ENCODE measurements at regions of chr12 and their contacts with region 1.

Region 1: GRCh38 chr12:28683356-28683755 is 465.7 kb upstream of the FAR2 start:
- DNase-seq: no peak
- ATAC-seq: no peak
- H3K4me3 ChIP-seq: no peak overlapping the region
- H3K27ac ChIP-seq: no peak overlapping the region
- H3K4me1 ChIP-seq: no peaks in the 10 kb centered on the region
- H3K27me3 ChIP-seq: no peaks in the 10 kb centered on the region; a peak in 1 of 5 replicates
- CTCF ChIP-seq: no peak
- EP300 ChIP-seq: no peak
- POLR2A ChIP-seq: no peak
- RAD21 ChIP-seq: no peak

Region 2: GRCh38 chr12:27952510-27952909 is 730.8 kb before region 1 on chr12:
- CTCF ChIA-PET with region 1: no interaction called
- POLR2A ChIA-PET with region 1: no interaction called
- in situ Hi-C with region 1: no loop called
- intact Hi-C with region 1: no loop called
- DNase-seq: no peak
- ATAC-seq: no peak
- H3K4me3 ChIP-seq: no peak overlapping the region
- H3K27ac ChIP-seq: no peak overlapping the region
- H3K4me1 ChIP-seq: peaks cover 7% of the 10 kb centered on the region
- H3K27me3 ChIP-seq: no peaks in the 10 kb centered on the region; a peak in 2 of 5 replicates
- CTCF ChIP-seq: no peak
- EP300 ChIP-seq: no peak
- POLR2A ChIP-seq: no peak
- RAD21 ChIP-seq: no peak

Region 3: DNA sequence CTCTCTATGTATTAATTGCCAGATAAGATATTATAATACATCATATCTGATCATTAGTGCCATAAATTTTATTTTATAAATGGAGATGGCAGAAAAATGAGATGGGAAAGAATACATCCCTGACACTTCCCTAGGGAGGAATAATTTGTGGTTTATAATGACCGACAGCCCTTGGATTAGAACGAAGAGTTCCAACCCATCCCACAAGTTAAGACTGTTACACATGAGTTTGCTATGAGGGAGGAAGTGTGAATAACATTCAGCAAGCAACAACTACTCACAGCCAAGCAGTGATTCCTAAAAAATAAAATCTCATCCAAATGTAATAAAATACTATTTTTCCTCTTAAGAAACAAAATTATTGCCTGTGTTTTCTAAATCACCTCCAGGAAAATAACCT is 194.1 kb before region 1 on chr12:
- CTCF ChIA-PET with region 1: no interaction called
- POLR2A ChIA-PET with region 1: no interaction called
- in situ Hi-C with region 1: no loop called
- intact Hi-C with region 1: no loop called
- DNase-seq: no peak
- ATAC-seq: no peak
- H3K4me3 ChIP-seq: no peak overlapping the region
- H3K27ac ChIP-seq: no peak overlapping the region
- H3K4me1 ChIP-seq: no peaks in the 10 kb centered on the region
- H3K27me3 ChIP-seq: no peaks in the 10 kb centered on the region
- CTCF ChIP-seq: no peak
- EP300 ChIP-seq: no peak
- POLR2A ChIP-seq: no peak
- RAD21 ChIP-seq: no peak

Region 4: GRCh38 chr12:28652239-28652638 is 31.1 kb before region 1 on chr12:
- CTCF ChIA-PET with region 1: no interaction called
- POLR2A ChIA-PET with region 1: no interaction called
- in situ Hi-C with region 1: no loop called
- intact Hi-C with region 1: loop called (anchors 1 kb)
- DNase-seq: no peak
- ATAC-seq: no peak
- H3K4me3 ChIP-seq: no peak overlapping the region
- H3K27ac ChIP-seq: no peak overlapping the region
- H3K4me1 ChIP-seq: no peaks in the 10 kb centered on the region
- H3K27me3 ChIP-seq: no peaks in the 10 kb centered on the region
- CTCF ChIP-seq: no peak
- EP300 ChIP-seq: no peak
- POLR2A ChIP-seq: no peak
- RAD21 ChIP-seq: no peak

Measured in HepG2 (cell line).